ENCODE measurements at regions of chr11 and their contacts with region 1.

Region 1: DNA sequence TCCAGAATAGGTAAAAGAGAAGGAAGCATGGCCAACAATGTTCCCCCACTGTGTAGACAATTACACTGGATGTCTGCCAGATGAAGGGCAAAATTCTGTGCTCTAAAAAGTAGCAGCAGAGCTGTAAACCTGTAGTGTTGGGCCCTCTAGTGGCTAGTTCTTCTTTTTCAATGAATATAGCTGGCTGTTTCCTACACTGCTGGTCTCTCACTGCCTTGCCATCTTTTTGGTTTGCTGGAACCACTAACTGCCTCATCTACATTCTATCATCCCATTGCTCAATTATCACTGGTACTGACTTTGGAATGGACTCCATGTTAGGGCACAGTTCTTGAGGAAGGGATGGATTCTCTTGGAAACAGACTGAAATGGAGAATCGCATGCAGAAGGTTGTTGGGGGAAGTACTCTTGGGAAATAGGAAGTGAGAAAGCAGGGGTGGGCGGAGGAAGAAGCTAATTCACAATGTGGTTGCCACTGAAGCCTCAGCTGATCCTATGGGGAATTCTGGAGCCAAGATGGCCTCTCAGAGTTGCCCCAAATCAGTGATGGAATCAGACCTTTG is 17.9 kb downstream of the KCNE3 start:
- DNase-seq: no peak
- H3K4me3 ChIP-seq: no peak overlapping the region
- H3K27ac ChIP-seq: no peak overlapping the region
- H3K4me1 ChIP-seq: peaks cover 0 to 30% (median 0%) of the 10 kb centered on the region in 3 donors
- H3K27me3 ChIP-seq: no peaks in the 10 kb centered on the region
- CTCF ChIP-seq: peak; percentile 62 to 82 (median 69)
- POLR2A ChIP-seq: no peak

Region 2: DNA sequence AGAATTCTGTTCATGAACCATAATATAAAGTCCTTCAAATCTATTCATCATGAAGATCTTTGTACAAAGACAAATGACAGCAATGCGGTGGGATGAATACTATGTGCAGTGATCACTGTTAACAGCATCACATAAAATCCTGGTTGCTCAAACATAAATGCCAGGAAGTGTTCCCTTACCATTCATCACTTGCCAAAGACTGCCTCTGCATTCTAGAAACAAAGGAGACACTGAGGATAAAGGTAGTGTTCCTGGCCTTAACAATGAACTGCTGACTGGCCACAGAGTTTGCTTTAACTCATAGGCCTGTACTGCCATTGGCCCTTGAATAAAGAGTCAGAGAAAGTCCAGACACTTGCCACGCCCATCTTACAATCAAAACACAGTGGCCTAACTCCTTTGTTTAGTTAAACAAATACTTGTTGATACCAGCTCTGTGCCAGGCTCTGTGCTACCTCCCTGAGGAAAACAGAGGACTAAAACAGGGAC is 308.2 kb before region 1 on chr11:
- intact Hi-C with region 1: no loop called
- DNase-seq: no peak
- H3K4me3 ChIP-seq: no peak overlapping the region
- H3K27ac ChIP-seq: no peak overlapping the region
- H3K4me1 ChIP-seq: peaks cover 4 to 28% (median 13%) of the 10 kb centered on the region in 3 donors
- H3K27me3 ChIP-seq: no peaks in the 10 kb centered on the region
- CTCF ChIP-seq: no peak
- POLR2A ChIP-seq: no peak

Region 3: GRCh38 chr11:74255741-74256369 is 193.6 kb before region 1 on chr11:
- intact Hi-C with region 1: loop called (anchors 5 kb)
- DNase-seq: no peak
- H3K4me3 ChIP-seq: no peak overlapping the region
- H3K27ac ChIP-seq: no peak overlapping the region
- H3K4me1 ChIP-seq: peaks cover 0 to 12% (median 4%) of the 10 kb centered on the region in 3 donors
- H3K27me3 ChIP-seq: peaks cover 0 to 2% (median 0%) of the 10 kb centered on the region in 4 donors
- CTCF ChIP-seq: peak; percentile 70 to 90 (median 89)
- POLR2A ChIP-seq: no peak

Region 4: GRCh38 chr11:74390697-74391096 is 58.8 kb before region 1 on chr11:
- intact Hi-C with region 1: loop called (anchors 5 kb)
- DNase-seq: no peak
- H3K4me3 ChIP-seq: no peak overlapping the region
- H3K27ac ChIP-seq: no peak overlapping the region
- H3K4me1 ChIP-seq: no peaks in the 10 kb centered on the region
- H3K27me3 ChIP-seq: no peaks in the 10 kb centered on the region
- CTCF ChIP-seq: no peak
- POLR2A ChIP-seq: no peak

Region 5: GRCh38 chr11:74403607-74404321 is 45.7 kb before region 1 on chr11:
- intact Hi-C with region 1: no loop called
- DNase-seq: no peak
- H3K4me3 ChIP-seq: no peak overlapping the region
- H3K27ac ChIP-seq: no peak overlapping the region
- H3K4me1 ChIP-seq: peaks cover 0 to 6% (median 0%) of the 10 kb centered on the region in 3 donors
- H3K27me3 ChIP-seq: no peaks in the 10 kb centered on the region
- CTCF ChIP-seq: no peak
- POLR2A ChIP-seq: no peak

Region 6: DNA sequence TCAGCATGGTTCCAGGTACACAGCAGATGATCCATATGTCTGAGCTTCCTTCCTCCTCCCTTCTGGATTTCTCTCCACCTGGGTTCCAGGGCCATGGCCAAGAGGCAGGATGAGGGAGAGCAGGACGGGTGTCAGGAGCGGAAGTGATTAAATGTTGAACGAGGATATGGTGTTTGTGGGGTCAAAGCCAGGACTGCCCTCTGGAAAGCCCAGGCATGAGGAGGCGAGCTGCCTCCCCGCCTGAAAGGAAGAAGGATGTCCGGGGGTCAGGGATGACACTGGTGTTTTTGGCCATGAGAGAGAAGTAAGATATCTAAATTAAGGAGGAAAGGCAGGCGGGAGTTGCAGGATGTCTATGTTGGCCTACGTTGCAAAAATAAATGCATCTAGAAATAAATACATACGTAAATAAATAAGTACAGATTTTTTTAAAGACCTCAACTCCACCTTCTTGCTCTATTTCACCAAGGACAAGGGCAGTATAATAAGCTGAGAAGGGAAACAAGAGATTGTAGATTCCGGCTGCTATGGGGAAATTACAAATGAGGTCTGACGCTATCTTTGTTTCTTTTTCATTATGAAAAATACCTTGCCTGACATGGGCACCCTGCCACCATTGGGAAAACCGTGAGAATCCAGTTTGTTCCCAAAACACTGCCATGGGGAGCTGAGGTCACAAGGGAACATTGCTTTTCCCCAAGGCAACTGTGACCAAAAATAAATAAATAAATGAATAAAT is 71.6 kb after region 1 on chr11:
- intact Hi-C with region 1: no loop called
- DNase-seq: no peak
- H3K4me3 ChIP-seq: no peak overlapping the region
- H3K27ac ChIP-seq: no peak overlapping the region
- H3K4me1 ChIP-seq: peaks cover 0 to 14% (median 0%) of the 10 kb centered on the region in 3 donors
- H3K27me3 ChIP-seq: no peaks in the 10 kb centered on the region
- CTCF ChIP-seq: no peak
- POLR2A ChIP-seq: no peak

Region 7: DNA sequence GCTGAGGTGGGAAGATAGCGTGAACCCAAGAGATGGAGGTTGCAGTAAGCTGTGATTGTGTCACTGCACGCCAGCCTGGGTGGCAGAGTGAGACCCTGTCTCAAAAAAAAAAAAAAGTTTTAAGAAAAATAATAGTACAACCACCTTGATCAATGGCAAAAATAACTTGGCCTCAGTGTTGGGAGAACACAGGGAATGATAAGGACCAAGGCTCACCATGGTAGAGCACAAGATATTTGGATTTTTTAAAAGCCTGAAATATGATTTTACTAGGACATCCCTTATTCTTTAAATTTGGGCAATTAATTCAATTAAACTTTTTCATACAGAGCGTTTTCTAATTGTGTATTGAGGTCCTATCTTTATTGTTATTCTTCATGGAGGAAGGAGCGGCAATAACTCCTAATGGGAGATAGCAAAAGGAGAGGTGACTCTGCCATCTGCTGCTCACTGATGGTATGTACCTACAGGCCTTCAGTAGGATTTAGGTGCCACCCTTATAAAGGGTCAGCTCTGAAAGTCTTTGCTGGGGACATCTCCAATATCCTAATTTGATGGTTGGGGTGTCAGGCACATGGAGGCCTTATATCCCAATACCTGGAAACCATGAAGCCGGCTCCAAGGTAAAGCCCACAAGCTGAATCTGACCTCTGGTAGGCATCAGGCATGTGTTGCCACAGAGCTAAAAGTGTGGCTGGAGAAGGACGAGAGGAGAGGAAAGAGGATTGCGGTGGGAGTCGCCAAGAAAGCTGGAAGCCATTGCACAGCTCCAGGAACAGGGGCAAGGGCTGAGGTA is 121.0 kb after region 1 on chr11:
- intact Hi-C with region 1: loop called (anchors 2 kb)
- DNase-seq: no peak
- H3K4me3 ChIP-seq: no peak overlapping the region
- H3K27ac ChIP-seq: no peak overlapping the region
- H3K4me1 ChIP-seq: no peaks in the 10 kb centered on the region
- H3K27me3 ChIP-seq: peaks cover 0 to 7% (median 0%) of the 10 kb centered on the region in 4 donors
- CTCF ChIP-seq: peak in 5 of 6 experiments; percentile 69 to 90 (median 84)
- POLR2A ChIP-seq: no peak